ENCODE measurements at regions of chr17 and their contacts with region 1.

Region 1: DNA sequence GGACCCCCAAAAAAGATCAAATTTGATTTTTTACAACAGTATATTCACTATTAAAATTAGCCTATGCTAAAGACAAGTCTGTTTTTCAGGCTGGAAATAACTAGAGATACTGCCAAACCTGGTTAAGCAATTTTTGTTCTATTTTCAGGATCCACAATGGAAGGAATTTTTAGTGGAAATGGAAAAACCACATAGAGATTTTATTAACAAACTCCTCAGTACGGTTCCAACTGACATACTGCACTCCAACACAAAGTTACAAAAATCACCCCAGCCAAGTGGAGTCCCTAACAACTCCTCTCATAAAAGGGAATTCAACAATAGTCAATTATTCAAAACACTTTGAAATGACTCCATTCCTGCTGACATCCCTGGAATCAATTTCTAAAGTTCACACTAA is 101.6 kb upstream of the TOB1 start:
- DNase-seq: no peak
- H3K4me3 ChIP-seq: no peak overlapping the region
- H3K27ac ChIP-seq: no peak overlapping the region
- H3K27me3 ChIP-seq: no peaks in the 10 kb centered on the region
- CTCF ChIP-seq: no peak

Region 2: GRCh38 chr17:50560185-50560824 is 407.5 kb before region 1 on chr17 and contains the start of gene CACNA1G:
- CTCF ChIA-PET with region 1: no interaction called
- POLR2A ChIA-PET with region 1: no interaction called
- DNase-seq: peak; percentile 26
- H3K4me3 ChIP-seq: peak within 1 kb of the TSS; percentile 47
- H3K27ac ChIP-seq: no peak within 1 kb of the TSS
- H3K27me3 ChIP-seq: peaks cover 64% of the 10 kb centered on the region
- CTCF ChIP-seq: no peak
- polyA plus RNA-seq, gene CACNA1G: 0.05 TPM in 1 of 2 replicates, not detected in the other

Region 3: GRCh38 chr17:50903604-50904520 is 63.9 kb before region 1 on chr17:
- CTCF ChIA-PET with region 1: no interaction called
- POLR2A ChIA-PET with region 1: no interaction called
- DNase-seq: peak; percentile 45
- H3K4me3 ChIP-seq: 0 out of 2 replicates have a peak overlapping the region, but pooled peaks have one; percentile 4
- H3K27ac ChIP-seq: peak overlapping the region; percentile 98
- H3K27me3 ChIP-seq: peaks cover 2% of the 10 kb centered on the region
- CTCF ChIP-seq: no peak

Region 4: GRCh38 chr17:50956750-50957523 is 10.9 kb before region 1 on chr17:
- CTCF ChIA-PET with region 1: interaction called, 20 read pairs
- POLR2A ChIA-PET with region 1: no interaction called
- DNase-seq: peak; percentile 20
- H3K4me3 ChIP-seq: no peak overlapping the region
- H3K27ac ChIP-seq: no peak overlapping the region
- H3K27me3 ChIP-seq: no peaks in the 10 kb centered on the region
- CTCF ChIP-seq: peak; percentile 87

Measured in AG04450 (cell line).